Thyroid gland (tissue), 4 donors: ENCODE measurements at regions of chr3 and their contacts with region 1.

Region 1: DNA sequence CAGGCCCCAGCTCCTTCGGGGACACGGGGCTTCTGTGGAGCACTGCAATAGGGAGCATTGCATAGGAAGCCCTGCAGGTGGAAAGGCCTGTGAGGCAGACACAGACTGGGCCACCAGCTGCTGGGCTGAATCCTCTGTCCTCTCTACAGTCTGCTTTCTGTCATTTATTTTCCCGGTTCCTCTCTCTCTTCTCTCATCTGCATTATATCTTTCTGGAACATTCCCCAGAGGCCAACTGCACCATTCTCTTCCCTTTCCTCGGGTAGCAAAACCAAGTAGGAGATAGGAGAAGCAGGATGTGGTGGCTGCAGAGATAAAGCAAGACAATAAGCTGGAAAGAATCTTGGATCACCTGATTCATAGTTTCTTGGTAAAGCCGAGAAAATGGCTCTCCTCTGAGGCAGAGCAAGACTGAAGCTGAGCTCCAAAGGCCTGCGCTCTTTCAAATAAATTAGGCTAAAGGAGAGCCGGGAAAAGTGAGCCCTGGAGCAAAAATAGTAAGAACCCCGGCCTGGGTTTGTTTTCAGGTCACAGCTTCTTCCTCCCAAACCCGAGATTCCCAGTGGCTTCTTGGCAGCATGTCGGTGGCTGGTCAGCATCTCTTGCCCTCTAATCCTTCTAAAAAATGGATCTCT is 5.3 kb downstream of the TM4SF4 start:
- DNase-seq: no peak
- H3K4me3 ChIP-seq: no peak overlapping the region
- H3K27ac ChIP-seq: peak overlapping the region in 2 of 3 donors; percentile 49 to 71
- H3K4me1 ChIP-seq: peaks cover 3 to 12% of the 10 kb centered on the region in 2 donors
- H3K27me3 ChIP-seq: no peaks in the 10 kb centered on the region
- CTCF ChIP-seq: no peak
- POLR2A ChIP-seq: no peak

Region 2: GRCh38 chr3:149352556-149352955 is 127.2 kb before region 1 on chr3:
- intact Hi-C with region 1: loop called (anchors 5 kb)
- DNase-seq: peak; percentile 54 to 65
- H3K4me3 ChIP-seq: no peak overlapping the region
- H3K27ac ChIP-seq: no peak overlapping the region
- H3K4me1 ChIP-seq: peaks cover 0 to 8% of the 10 kb centered on the region in 2 donors
- H3K27me3 ChIP-seq: no peaks in the 10 kb centered on the region
- CTCF ChIP-seq: peak; percentile 46 to 84 (median 72)
- POLR2A ChIP-seq: no peak

Region 3: DNA sequence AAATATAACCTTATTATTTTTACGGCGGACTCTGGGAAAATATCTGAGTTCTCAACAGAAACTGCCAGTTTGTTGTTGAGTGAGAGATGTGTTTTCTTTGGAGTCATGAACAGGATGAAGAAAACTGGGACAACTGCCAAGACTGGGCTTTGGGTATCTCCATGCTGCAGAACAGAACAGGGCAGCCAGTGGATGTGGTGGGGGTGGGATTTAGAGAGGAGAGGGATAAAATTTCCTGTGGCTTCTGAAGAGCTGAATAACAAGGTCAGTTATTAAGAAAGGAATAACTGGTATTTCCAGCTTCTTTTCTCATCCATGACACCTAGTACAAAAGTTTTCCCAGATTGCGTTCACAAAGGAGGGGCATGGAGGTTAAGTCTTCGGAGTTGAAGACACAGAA is 84.0 kb before region 1 on chr3:
- intact Hi-C with region 1: loop called (anchors 5 kb)
- DNase-seq: peak; percentile 81 to 82
- H3K4me3 ChIP-seq: no peak overlapping the region
- H3K27ac ChIP-seq: peak overlapping the region; percentile 75 to 82 (median 80)
- H3K4me1 ChIP-seq: peaks cover 19 to 22% of the 10 kb centered on the region in 2 donors
- H3K27me3 ChIP-seq: no peaks in the 10 kb centered on the region
- CTCF ChIP-seq: no peak
- POLR2A ChIP-seq: no peak

Region 4: GRCh38 chr3:149417174-149417573 is 62.6 kb before region 1 on chr3:
- intact Hi-C with region 1: no loop called
- DNase-seq: no peak
- H3K4me3 ChIP-seq: no peak overlapping the region
- H3K27ac ChIP-seq: no peak overlapping the region
- H3K4me1 ChIP-seq: peaks cover 8 to 14% of the 10 kb centered on the region in 2 donors
- H3K27me3 ChIP-seq: no peaks in the 10 kb centered on the region
- CTCF ChIP-seq: no peak
- POLR2A ChIP-seq: no peak

Region 5: DNA sequence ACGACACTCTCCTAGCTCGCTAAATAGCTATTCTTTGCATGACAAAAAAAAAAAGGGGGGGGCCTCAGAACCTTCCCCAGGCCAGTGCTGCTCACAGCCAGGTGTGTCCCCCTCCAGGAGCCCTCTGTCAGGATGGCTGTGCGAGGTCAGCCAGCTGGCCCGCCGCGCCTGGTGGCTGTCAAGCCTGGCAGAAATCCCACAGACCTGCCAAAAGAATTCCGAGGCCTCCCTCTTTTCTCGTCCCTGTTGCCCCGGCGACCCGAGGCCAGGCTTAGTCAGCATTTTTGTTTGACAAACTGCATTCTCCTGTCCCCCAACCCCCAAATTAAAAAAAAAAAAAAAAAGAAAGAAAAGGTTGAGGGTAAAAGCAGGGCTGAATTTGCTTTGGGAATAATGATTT is 56.7 kb after region 1 on chr3:
- intact Hi-C with region 1: no loop called
- DNase-seq: peak; percentile 94 to 97
- H3K4me3 ChIP-seq: no peak overlapping the region
- H3K27ac ChIP-seq: peak overlapping the region; percentile 80 to 95 (median 84)
- H3K4me1 ChIP-seq: peaks cover 43 to 85% of the 10 kb centered on the region in 2 donors
- H3K27me3 ChIP-seq: no peaks in the 10 kb centered on the region
- CTCF ChIP-seq: no peak
- POLR2A ChIP-seq: no peak